ENCODE measurements at regions of chrX and their contacts with region 1.

Region 1: DNA sequence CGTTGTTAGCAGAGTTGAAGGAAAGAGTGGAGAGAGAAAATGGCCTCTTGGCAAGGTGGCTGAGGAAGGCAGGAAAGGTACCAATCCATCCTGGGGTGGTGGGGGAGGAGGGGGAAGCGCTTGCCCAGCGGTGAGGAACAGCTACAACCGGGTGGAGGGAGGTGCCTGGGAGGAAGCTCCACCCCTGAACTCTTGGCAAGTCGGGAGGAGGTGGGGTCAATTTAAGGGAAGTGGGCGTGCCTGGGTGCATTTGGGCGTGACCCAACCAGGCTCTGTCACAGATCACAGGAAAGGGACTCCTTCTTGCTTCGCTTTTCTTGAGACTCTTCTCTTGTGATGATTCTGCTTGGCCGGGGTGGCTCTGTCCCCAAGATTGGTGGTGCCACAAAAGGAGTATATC is 41.7 kb downstream of the BCORL1 start:
- DNase-seq: peak; percentile 83 to 91 (median 91)
- H3K4me3 ChIP-seq: peak overlapping the region in 1 of 7 experiments; percentile 10
- H3K27ac ChIP-seq: no peak overlapping the region
- H3K4me1 ChIP-seq: peaks cover 0 to 4% (median 2%) of the 10 kb centered on the region in 4 experiments
- H3K27me3 ChIP-seq: no peaks in the 10 kb centered on the region

Region 2: DNA sequence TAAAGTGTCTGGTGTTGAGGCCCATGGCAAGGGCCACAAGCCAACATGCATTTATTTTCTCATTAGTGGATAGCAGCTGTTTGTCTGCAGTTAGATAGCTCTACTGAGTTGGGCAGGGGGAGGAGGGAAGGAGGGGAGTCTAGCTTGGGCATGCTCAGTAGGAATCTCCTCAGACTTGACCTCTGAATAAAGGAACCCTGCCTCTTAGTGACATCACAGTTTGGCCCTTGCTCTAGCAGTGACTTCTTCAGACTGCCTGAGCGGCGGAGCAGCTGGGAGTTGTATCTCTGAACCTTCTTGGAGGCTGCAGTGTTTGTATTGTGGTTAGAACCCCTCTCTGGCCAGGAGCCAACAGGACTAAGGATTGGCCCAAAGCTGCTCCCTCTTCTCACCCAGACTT is 15.7 kb after region 1 on chrX:
- CTCF ChIA-PET with region 1: interaction called, 30 read pairs
- POLR2A ChIA-PET with region 1: no interaction called
- DNase-seq: no peak
- H3K4me3 ChIP-seq: no peak overlapping the region
- H3K27ac ChIP-seq: no peak overlapping the region
- H3K4me1 ChIP-seq: no peaks in the 10 kb centered on the region
- H3K27me3 ChIP-seq: no peaks in the 10 kb centered on the region